ENCODE measurements at regions of chr11 and their contacts with region 1.

Region 1: DNA sequence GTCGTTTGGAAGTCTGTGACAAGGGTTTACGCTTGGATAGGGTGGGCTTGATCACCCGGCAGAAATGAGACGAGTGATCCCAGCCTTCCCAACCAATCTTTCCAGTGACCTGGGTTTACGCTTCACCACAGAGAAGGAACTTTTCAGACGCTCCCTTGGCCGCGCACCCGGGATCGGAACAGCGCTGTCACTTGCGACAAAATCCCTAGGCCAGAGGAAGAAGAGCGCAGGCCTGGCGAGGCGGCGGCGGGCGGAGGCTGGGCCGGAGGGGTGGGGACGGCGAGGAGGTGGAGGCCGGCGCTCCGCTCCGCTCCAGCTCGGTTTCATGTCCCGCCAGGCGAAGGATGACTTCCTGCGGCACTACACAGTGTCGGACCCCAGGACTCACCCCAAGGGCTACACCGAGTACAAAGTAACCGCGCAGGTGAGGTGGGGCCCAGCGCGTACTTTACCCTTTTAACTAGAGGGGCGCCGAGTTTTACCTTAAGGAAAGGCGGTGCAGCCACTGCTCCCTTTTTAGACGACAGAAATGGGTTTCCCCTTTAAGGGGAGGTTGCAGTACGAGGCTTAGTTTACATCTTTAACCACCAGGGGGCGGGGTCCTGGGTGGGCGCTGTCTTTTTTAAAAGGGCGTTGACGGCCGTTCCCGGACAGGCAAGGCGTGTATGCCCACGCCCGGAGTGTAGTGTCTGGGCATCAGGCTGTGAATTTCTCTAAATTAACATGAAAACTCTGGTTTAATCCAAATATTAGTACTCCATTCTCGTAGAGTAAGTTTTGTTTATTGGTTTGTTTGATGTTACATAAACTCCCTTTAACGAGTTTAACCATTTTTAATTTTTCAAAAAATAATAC is at the start of gene SNX15:
- H3K4me3 ChIP-seq: peak within 1 kb of the TSS; percentile 70
- H3K27ac ChIP-seq: peak within 1 kb of the TSS; percentile 64; the same call in 1 of the 2 replicates
- H3K4me1 ChIP-seq: 0 out of 2 replicates have a peak, but pooled peaks cover 2% of the 10 kb centered on the region
- CTCF ChIP-seq: peak; percentile 66

Region 2: GRCh38 chr11:64923795-64924101 is 103.7 kb before region 1 on chr11:
- CTCF ChIA-PET with region 1: no interaction called
- POLR2A ChIA-PET with region 1: no interaction called
- H3K4me3 ChIP-seq: peak overlapping the region; percentile 24
- H3K27ac ChIP-seq: no peak overlapping the region; the same call in 1 of the 2 replicates
- H3K4me1 ChIP-seq: no peaks in the 10 kb centered on the region
- CTCF ChIP-seq: no peak

Region 3: DNA sequence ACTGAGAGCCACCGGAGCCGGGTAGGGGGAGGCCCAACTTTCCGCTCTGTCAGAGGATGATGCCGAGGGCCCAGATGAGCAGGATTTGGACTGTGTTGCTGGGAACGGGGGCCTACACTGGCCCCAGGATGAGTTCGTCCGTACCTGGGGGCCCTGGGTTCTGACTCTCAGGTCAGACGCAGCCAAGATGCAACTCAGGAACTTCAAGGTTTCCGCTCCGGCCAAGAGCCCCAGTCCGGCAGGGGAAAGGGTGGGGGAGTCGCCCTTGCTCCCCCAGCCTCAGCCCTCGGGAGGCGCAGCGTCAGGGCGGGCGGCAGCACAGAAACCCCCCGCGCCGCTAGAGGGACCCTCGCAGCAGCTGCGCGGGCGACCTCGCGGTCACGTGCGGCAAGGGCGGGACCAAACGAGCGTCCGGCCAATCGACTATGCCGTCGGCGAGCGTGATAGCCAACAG is 13.7 kb before region 1 on chr11:
- CTCF ChIA-PET with region 1: interaction called, 24 read pairs
- POLR2A ChIA-PET with region 1: interaction called, 6 read pairs
- H3K4me3 ChIP-seq: peak overlapping the region; percentile 77
- H3K27ac ChIP-seq: peak overlapping the region; percentile 86; the same call in 1 of the 2 replicates
- H3K4me1 ChIP-seq: no peaks in the 10 kb centered on the region
- CTCF ChIP-seq: peak; percentile 97

Region 4: DNA sequence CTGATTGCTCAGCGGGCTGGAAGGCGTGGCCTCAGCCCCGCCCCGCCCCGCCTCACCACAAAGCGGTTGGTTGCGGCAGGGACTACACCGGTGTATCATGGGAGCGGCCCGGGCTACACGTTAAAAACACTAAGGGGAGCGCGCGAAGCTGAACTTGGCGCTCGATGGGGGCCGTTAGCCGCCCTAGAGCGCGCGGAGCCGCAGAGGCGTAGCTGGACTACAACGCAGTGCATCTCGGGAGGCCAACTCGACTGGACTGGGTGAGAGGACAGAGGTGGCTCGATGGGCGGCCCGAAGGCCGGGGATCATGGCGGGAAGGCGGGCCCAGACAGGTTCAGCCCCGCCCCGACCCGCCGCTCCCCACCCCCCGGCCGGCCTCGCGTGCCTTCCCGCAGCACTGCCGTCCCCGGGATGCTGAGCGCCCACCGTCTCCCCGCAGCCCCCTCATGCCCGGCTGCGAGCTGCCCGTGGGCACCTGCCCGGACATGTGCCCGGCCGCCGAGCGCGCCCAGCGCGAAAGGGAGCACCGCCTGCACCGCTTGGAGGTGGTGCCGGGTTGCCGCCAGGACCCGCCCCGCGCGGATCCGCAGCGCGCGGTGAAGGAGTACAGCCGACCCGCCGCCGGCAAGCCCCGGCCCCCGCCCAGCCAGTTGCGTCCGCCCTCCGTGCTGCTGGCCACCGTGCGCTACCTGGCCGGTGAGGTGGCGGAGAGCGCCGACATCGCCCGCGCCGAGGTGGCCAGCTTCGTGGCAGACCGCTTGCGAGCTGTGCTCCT is 13.6 kb after region 1 on chr11 and contains the start of gene SAC3D1:
- CTCF ChIA-PET with region 1: interaction called, 5 read pairs
- POLR2A ChIA-PET with region 1: interaction called, 17 read pairs
- H3K4me3 ChIP-seq: peak within 1 kb of the TSS; percentile 80
- H3K27ac ChIP-seq: peak within 1 kb of the TSS; percentile 75
- H3K4me1 ChIP-seq: no peaks in the 10 kb centered on the region
- CTCF ChIP-seq: no peak

Measured in HEK293 (cell line).